GM12878 (cell line): ENCODE measurements at regions of chr2 and their contacts with region 1.

Region 1: GRCh38 chr2:44087036-44087713 is 81.5 kb upstream of the PPM1B start:
- DNase-seq: no peak
- ATAC-seq: peak; percentile 79
- H3K4me3 ChIP-seq: peak overlapping the region; percentile 61; the same call in 1 of the 2 replicates
- H3K27ac ChIP-seq: no peak overlapping the region
- H3K4me1 ChIP-seq: peaks cover 13% of the 10 kb centered on the region
- H3K27me3 ChIP-seq: no peaks in the 10 kb centered on the region
- CTCF ChIP-seq: peak; percentile 93 to 97 (median 96); a peak in 5 of 6 replicates
- EP300 ChIP-seq: no peak
- POLR2A ChIP-seq: no peak
- RAD21 ChIP-seq: peak; percentile 95

Region 2: GRCh38 chr2:44044281-44044720 is 42.9 kb before region 1 on chr2:
- CTCF ChIA-PET with region 1: interaction called, 9 read pairs
- POLR2A ChIA-PET with region 1: interaction called, 4 read pairs
- RAD21 ChIA-PET with region 1: interaction called, 4 read pairs
- SMC1A ChIA-PET with region 1: interaction called, 3 read pairs
- in situ Hi-C with region 1: no loop called
- intact Hi-C with region 1: loop called (anchors 2 kb)
- DNase-seq: peak; percentile 44
- ATAC-seq: peak; percentile 100
- H3K4me3 ChIP-seq: no peak overlapping the region
- H3K27ac ChIP-seq: no peak overlapping the region
- H3K4me1 ChIP-seq: peaks cover 5% of the 10 kb centered on the region
- H3K27me3 ChIP-seq: no peaks in the 10 kb centered on the region
- CTCF ChIP-seq: peak; percentile 94 to 98 (median 94); a peak in 5 of 6 replicates
- EP300 ChIP-seq: no peak; a peak in 1 of 4 replicates
- POLR2A ChIP-seq: no peak
- RAD21 ChIP-seq: peak; percentile 92

Region 3: GRCh38 chr2:44167940-44168680 is 80.9 kb after region 1 on chr2:
- CTCF ChIA-PET with region 1: no interaction called
- POLR2A ChIA-PET with region 1: interaction called, 3 read pairs
- RAD21 ChIA-PET with region 1: interaction called, 9 read pairs
- SMC1A ChIA-PET with region 1: interaction called, 18 read pairs
- in situ Hi-C with region 1: no loop called
- intact Hi-C with region 1: loop called (anchors 2 kb)
- DNase-seq: peak; percentile 98
- ATAC-seq: peak; percentile 83
- H3K4me3 ChIP-seq: peak overlapping the region; percentile 59
- H3K27ac ChIP-seq: peak overlapping the region; percentile 92
- H3K4me1 ChIP-seq: no peaks in the 10 kb centered on the region
- H3K27me3 ChIP-seq: no peaks in the 10 kb centered on the region
- CTCF ChIP-seq: no peak
- EP300 ChIP-seq: no peak
- POLR2A ChIP-seq: peak; percentile 80
- RAD21 ChIP-seq: no peak

Region 4: DNA sequence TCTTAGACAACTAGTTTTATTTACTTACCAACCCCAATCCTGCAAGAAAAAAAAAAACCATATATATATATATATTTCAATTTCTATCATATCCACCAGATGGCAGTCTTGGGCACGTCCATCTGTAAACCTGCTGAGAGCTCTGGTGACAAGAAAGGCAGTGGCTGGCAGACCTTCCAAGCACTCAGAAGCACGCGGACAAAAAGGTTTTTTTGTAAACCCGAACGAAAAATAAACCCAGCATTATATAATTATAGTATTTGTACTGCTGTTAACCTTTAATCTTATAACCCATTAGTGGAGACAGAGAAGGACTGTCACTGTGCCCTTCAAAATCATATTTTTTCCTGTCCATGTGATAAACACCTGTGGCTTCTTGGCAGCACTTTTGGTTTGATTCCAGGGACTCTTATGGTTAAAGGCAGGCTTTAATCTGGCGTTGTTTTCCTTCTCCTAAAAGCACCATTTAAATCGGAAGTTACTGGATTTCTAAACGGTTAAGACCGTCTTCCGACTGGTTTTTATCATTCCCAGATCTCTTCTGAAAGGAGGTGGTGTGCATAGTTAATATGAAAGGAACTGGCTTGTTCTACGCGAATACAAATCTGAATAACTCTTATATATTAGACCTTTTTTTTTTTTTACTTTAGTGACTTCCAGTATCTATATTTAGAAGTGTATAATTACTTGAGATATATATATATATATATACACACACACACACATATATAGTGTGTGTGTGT is 157.1 kb after region 1 on chr2:
- CTCF ChIA-PET with region 1: interaction called, 24 read pairs
- POLR2A ChIA-PET with region 1: no interaction called
- RAD21 ChIA-PET with region 1: interaction called, 3 read pairs
- SMC1A ChIA-PET with region 1: interaction called, 37 read pairs
- in situ Hi-C with region 1: no loop called
- intact Hi-C with region 1: loop called (anchors 5 kb)
- DNase-seq: no peak
- ATAC-seq: peak; percentile 85
- H3K4me3 ChIP-seq: no peak overlapping the region
- H3K27ac ChIP-seq: no peak overlapping the region
- H3K4me1 ChIP-seq: no peaks in the 10 kb centered on the region
- H3K27me3 ChIP-seq: no peaks in the 10 kb centered on the region
- CTCF ChIP-seq: peak; percentile 33 to 45 (median 41); a peak in 4 of 6 replicates
- EP300 ChIP-seq: no peak
- POLR2A ChIP-seq: no peak
- RAD21 ChIP-seq: peak; percentile 77

Region 5: GRCh38 chr2:44342854-44343253 is 255.7 kb after region 1 on chr2:
- CTCF ChIA-PET with region 1: interaction called, 19 read pairs
- POLR2A ChIA-PET with region 1: no interaction called
- RAD21 ChIA-PET with region 1: interaction called, 6 read pairs
- SMC1A ChIA-PET with region 1: interaction called, 17 read pairs
- in situ Hi-C with region 1: loop called (anchors 10 kb)
- intact Hi-C with region 1: loop called (anchors 5 kb)
- DNase-seq: no peak
- ATAC-seq: peak; percentile 66; the same call in 2 of the 3 replicates
- H3K4me3 ChIP-seq: no peak overlapping the region
- H3K27ac ChIP-seq: no peak overlapping the region
- H3K4me1 ChIP-seq: no peaks in the 10 kb centered on the region
- H3K27me3 ChIP-seq: no peaks in the 10 kb centered on the region
- CTCF ChIP-seq: peak; percentile 20 to 54 (median 39); a peak in 5 of 6 replicates
- EP300 ChIP-seq: no peak
- POLR2A ChIP-seq: no peak
- RAD21 ChIP-seq: peak; percentile 64